Activated T-helper 2 cell treated with anti-CD3 and anti-CD28 coated beads, Interferon-gamma antibody, Interleukin-2, Interleukin-4, amounts not matched to agents 10 μg/mL and 5 μg/mL and 100 μg/mL, durations not matched to agents 14 hours and 24 hours and 36 hours (primary cell): ENCODE measurements at regions of chr6 and their contacts with region 1.

Region 1: DNA sequence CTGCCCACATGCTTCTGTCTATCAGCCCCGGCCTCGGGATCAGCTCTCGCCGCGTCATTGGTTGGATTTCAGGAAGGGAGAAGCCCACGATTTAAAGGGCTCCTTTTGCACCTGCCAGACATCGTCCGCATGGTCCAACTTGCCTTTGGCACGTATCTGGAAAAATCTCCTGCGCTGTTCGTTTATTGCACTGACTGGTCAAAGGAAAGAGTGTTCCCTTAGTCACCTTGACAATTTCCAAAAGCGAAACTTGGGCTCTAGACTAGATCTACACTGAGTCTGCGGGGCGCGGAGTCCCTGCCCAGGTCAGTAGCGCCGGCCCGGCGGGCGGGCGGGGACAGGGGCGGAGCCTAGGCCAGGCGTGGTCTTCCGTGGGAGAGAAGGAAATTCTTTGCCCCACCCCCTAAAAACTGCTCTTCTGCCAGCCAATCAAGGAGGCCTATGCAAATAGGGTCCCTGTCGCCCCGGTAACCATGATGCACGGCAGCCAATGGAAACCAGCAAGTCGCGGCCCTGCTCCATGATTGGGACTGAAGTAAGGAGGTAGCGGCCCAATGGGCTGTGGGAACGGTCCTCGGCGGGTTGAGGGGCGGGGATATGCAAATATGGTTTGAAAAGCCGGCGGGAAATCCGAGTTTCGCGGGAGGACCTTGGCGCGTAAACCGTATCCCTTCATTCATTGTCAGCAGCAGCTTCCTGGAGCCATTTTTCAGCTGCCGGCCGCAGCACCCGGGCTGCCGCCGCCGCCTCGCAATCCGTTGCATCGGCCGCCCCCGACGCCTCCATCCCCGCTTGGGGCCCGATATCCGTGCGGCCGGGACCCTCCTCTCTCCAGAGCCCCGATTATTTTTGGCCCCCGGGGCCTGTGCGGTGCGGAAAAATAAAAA is at the start of gene E2F3:
- DNase-seq: peak; percentile 99
- H3K4me3 Mint-ChIP-seq: peak within 1 kb of the TSS; percentile 97
- H3K27ac Mint-ChIP-seq: peak within 1 kb of the TSS; percentile 99
- H3K4me1 Mint-ChIP-seq: peaks cover 32% of the 10 kb centered on the region
- H3K27me3 Mint-ChIP-seq: no peaks in the 10 kb centered on the region
- total RNA-seq, gene E2F3: 27.9 TPM in 2 replicates

Region 2: GRCh38 chr6:20212392-20213217 is 188.8 kb before region 1 on chr6 and contains the start of gene MBOAT1:
- intact Hi-C with region 1: loop called (anchors 2 kb)
- DNase-seq: peak; percentile 77
- H3K4me3 Mint-ChIP-seq: peak within 1 kb of the TSS; percentile 90
- H3K27ac Mint-ChIP-seq: peak within 1 kb of the TSS; percentile 94
- H3K4me1 Mint-ChIP-seq: peaks cover 41% of the 10 kb centered on the region
- H3K27me3 Mint-ChIP-seq: no peaks in the 10 kb centered on the region
- total RNA-seq, gene MBOAT1: 32.8 and 33.8 TPM in 2 replicates

Region 3: GRCh38 chr6:20319520-20320357 is 81.7 kb before region 1 on chr6:
- intact Hi-C with region 1: loop called (anchors 1 kb)
- DNase-seq: peak; percentile 76
- H3K4me3 Mint-ChIP-seq: peak overlapping the region; percentile 81
- H3K27ac Mint-ChIP-seq: peak overlapping the region; percentile 97
- H3K4me1 Mint-ChIP-seq: peaks cover 20% of the 10 kb centered on the region
- H3K27me3 Mint-ChIP-seq: peaks cover 18% of the 10 kb centered on the region

Region 4: GRCh38 chr6:20352346-20352745 is 49.1 kb before region 1 on chr6:
- intact Hi-C with region 1: loop called (anchors 1 kb)
- DNase-seq: no peak
- H3K4me3 Mint-ChIP-seq: no peak overlapping the region
- H3K27ac Mint-ChIP-seq: peak overlapping the region; percentile 55
- H3K4me1 Mint-ChIP-seq: peaks cover 34% of the 10 kb centered on the region
- H3K27me3 Mint-ChIP-seq: no peaks in the 10 kb centered on the region

Region 5: GRCh38 chr6:20455251-20455940 is 53.9 kb after region 1 on chr6:
- intact Hi-C with region 1: loop called (anchors 2 kb)
- DNase-seq: no peak
- H3K4me3 Mint-ChIP-seq: no peak overlapping the region
- H3K27ac Mint-ChIP-seq: peak overlapping the region; percentile 67
- H3K4me1 Mint-ChIP-seq: peaks cover 40% of the 10 kb centered on the region
- H3K27me3 Mint-ChIP-seq: no peaks in the 10 kb centered on the region